Posterior vena cava (tissue), 2 donors: ENCODE measurements at regions of chr18 and their contacts with region 1.

Region 1: DNA sequence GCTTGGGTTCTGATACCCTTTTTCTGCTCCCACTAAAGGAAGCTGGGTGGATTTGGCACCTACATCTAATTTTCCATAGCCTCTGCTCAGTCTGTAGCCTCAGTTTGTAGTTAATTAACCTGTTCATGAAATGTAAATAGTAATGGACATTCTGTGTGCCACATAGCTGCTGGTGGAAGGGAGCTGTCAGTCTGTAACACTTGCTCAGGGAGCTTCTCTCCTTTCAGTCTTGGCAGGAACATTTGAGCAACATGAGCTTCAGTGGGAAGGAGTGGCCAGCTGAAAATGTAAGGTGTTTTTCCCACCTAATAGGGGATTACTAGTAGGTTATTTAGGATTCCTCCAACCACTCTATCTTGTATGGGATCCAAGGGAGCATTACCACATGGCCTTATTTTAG is 203.4 kb downstream of the ASXL3 start:
- DNase-seq: no peak

Region 2: GRCh38 chr18:33205777-33206176 is 575.7 kb before region 1 on chr18:
- intact Hi-C with region 1: loop called in 1 of 2 experiments (anchors 5 kb)
- DNase-seq: no peak

Region 3: GRCh38 chr18:33495278-33495677 is 286.2 kb before region 1 on chr18:
- intact Hi-C with region 1: no loop called
- DNase-seq: no peak

Region 4: GRCh38 chr18:34048423-34048822 is 267.0 kb after region 1 on chr18:
- intact Hi-C with region 1: no loop called
- DNase-seq: no peak